ENCODE measurements at regions of chr9 and their contacts with region 1.

Region 1: GRCh38 chr9:893843-894420 is 52.4 kb downstream of the DMRT1 start:
- DNase-seq: peak; percentile 76
- ATAC-seq: peak; percentile 95
- H3K4me3 ChIP-seq: no peak overlapping the region
- H3K4me3 Mint-ChIP-seq: no peak overlapping the region
- H3K27ac ChIP-seq: no peak overlapping the region
- H3K27ac Mint-ChIP-seq: peak overlapping the region; percentile 26
- H3K4me1 ChIP-seq: peaks cover 13 to 16% of the 10 kb centered on the region in 2 donors
- H3K4me1 Mint-ChIP-seq: peaks cover 15% of the 10 kb centered on the region
- H3K27me3 ChIP-seq: no peaks in the 10 kb centered on the region
- H3K27me3 Mint-ChIP-seq: peaks cover 19% of the 10 kb centered on the region
- CTCF ChIP-seq: peak; percentile 76

Region 2: GRCh38 chr9:1009101-1009707 is 115.3 kb after region 1 on chr9:
- CTCF ChIA-PET with region 1: interaction called, 27 read pairs
- POLR2A ChIA-PET with region 1: no interaction called
- intact Hi-C with region 1: no loop called
- DNase-seq: peak; percentile 74
- ATAC-seq: peak; percentile 89
- H3K4me3 ChIP-seq: no peak overlapping the region
- H3K4me3 Mint-ChIP-seq: no peak overlapping the region
- H3K27ac ChIP-seq: no peak overlapping the region
- H3K27ac Mint-ChIP-seq: no peak overlapping the region
- H3K4me1 ChIP-seq: peaks cover 3% of the 10 kb centered on the region in 2 donors
- H3K4me1 Mint-ChIP-seq: no peaks in the 10 kb centered on the region
- H3K27me3 ChIP-seq: peaks cover 0 to 17% (median 0%) of the 10 kb centered on the region in 4 experiments
- H3K27me3 Mint-ChIP-seq: peaks cover 46% of the 10 kb centered on the region
- CTCF ChIP-seq: peak; percentile 93

Region 3: DNA sequence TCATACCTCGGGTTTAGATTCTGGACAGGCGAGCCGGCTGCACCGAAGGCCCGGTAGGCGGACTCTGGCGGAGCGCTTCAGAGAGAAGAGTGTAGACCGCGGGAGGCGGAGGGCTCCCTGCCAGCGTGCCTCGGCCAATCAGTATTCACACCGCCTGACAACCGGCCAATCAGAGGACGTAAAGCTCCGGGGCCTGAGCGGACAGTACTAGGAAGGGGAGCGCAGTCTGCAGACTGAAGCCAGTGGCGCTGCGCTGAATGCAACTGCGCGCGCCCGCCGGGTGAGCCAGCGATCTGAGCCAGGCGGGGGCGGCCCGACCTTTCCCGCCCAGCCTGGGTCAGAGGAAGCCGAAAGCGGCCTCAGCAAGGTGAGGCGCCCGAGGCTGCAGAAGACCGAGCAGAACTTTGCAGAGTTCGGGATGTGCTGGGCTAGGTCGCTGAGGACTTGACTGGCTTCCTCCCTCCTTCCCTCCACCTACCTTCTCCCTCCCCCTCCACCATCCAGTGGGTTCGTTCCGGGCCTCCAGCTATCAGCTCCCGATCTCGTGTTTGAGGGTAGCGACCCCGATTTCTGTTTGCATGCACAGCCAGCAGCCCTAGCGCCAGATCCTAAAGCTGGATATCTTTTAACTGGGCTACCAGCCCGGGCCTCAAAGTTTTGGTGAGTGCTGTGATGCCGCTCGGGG is 156.3 kb after region 1 on chr9 and contains the start of gene DMRT2:
- CTCF ChIA-PET with region 1: no interaction called
- POLR2A ChIA-PET with region 1: no interaction called
- intact Hi-C with region 1: no loop called
- DNase-seq: no peak
- ATAC-seq: peak; percentile 28
- H3K4me3 ChIP-seq: no peak within 1 kb of the TSS
- H3K4me3 Mint-ChIP-seq: peak within 1 kb of the TSS; percentile 59
- H3K27ac ChIP-seq: no peak within 1 kb of the TSS
- H3K27ac Mint-ChIP-seq: peak within 1 kb of the TSS; percentile 37
- H3K4me1 ChIP-seq: peaks cover 49 to 63% of the 10 kb centered on the region in 2 donors
- H3K4me1 Mint-ChIP-seq: peaks cover 41% of the 10 kb centered on the region
- H3K27me3 ChIP-seq: peaks cover 0 to 86% (median 78%) of the 10 kb centered on the region in 4 experiments
- H3K27me3 Mint-ChIP-seq: peaks cover 72% of the 10 kb centered on the region
- CTCF ChIP-seq: no peak
- total RNA-seq, gene DMRT2: not detected in 2 replicates